ENCODE measurements at regions of chr9 and their contacts with region 1.

Region 1: GRCh38 chr9:1673300-1673699 is 341.8 kb upstream of the SMARCA2 start:
- DNase-seq: no peak
- ATAC-seq: no peak
- H3K4me3 ChIP-seq: no peak overlapping the region
- H3K27ac ChIP-seq: no peak overlapping the region
- H3K4me1 ChIP-seq: no peaks in the 10 kb centered on the region
- H3K27me3 ChIP-seq: no peaks in the 10 kb centered on the region
- CTCF ChIP-seq: no peak

Region 2: GRCh38 chr9:1619915-1620710 is 53.2 kb before region 1 on chr9:
- intact Hi-C with region 1: loop called in 1 of 10 experiments (anchors 10 kb)
- DNase-seq: no peak
- ATAC-seq: no peak
- H3K4me3 ChIP-seq: no peak overlapping the region
- H3K27ac ChIP-seq: no peak overlapping the region
- H3K4me1 ChIP-seq: no peaks in the 10 kb centered on the region
- H3K27me3 ChIP-seq: peaks cover 0 to 17% (median 0%) of the 10 kb centered on the region in 7 donors
- CTCF ChIP-seq: peak in 7 of 9 donors; percentile 18 to 39 (median 28)

Region 3: DNA sequence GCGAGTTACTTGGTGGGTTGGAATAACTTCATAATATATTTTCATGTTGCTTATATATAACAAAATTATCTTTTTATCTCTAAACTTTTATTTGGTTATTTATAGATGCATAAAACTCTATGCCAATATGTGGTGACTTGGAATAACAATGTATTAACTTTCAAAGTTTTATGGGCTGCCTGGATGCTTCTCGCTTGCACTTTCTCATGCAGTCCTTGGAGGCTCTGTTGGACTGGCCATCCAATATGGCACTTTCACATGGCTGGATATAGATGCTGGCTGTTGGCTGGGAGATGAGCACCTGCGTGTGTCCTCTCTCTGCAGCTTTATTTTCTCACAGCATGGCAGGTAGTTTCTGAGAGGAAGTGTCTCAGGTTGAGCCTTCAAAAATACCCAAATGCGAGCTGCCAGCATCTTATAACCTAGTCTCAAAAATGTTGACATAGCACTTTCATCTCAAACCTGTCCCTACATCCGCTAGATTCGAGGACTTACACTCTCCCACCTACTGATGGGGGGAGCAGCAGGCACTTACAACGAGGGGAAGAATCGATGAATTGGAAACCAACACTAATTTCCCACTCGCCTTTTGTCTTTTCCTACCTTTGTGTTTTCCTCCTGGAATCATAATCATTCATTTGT is 293.5 kb after region 1 on chr9:
- intact Hi-C with region 1: no loop called
- DNase-seq: no peak
- ATAC-seq: no peak
- H3K4me3 ChIP-seq: no peak overlapping the region
- H3K27ac ChIP-seq: no peak overlapping the region
- H3K4me1 ChIP-seq: peaks cover 0 to 8% (median 2%) of the 10 kb centered on the region in 9 donors
- H3K27me3 ChIP-seq: no peaks in the 10 kb centered on the region
- CTCF ChIP-seq: no peak